H1 (cell line): ENCODE measurements at regions of chr3 and their contacts with region 1.

Region 1: GRCh38 chr3:100089812-100090668 is 24.3 kb downstream of the FILIP1L start:
- DNase-seq: peak in 1 of 2 experiments; percentile 10
- H3K4me3 ChIP-seq: no peak overlapping the region
- H3K27ac ChIP-seq: no peak overlapping the region
- H3K4me1 ChIP-seq: peaks cover 0 to 7% (median 3%) of the 10 kb centered on the region in 4 experiments; a peak in 5 of 7 replicates
- H3K27me3 ChIP-seq: no peaks in the 10 kb centered on the region
- CTCF ChIP-seq: peak; percentile 49 to 76 (median 51)
- EP300 ChIP-seq: no peak
- POLR2A ChIP-seq: no peak
- RAD21 ChIP-seq: peak; percentile 54 to 61

Region 2: GRCh38 chr3:100103558-100104441 is 13.8 kb after region 1 on chr3:
- CTCF ChIA-PET with region 1: interaction called, 11 read pairs
- POLR2A ChIA-PET with region 1: no interaction called
- DNase-seq: no peak
- H3K4me3 ChIP-seq: no peak overlapping the region
- H3K27ac ChIP-seq: no peak overlapping the region
- H3K4me1 ChIP-seq: peaks cover 0 to 2% (median 0%) of the 10 kb centered on the region in 4 experiments; a peak in 1 of 7 replicates
- H3K27me3 ChIP-seq: no peaks in the 10 kb centered on the region
- CTCF ChIP-seq: no peak
- EP300 ChIP-seq: no peak
- POLR2A ChIP-seq: no peak
- RAD21 ChIP-seq: no peak